Heart right ventricle (tissue), 16 donors: ENCODE measurements at regions of chr7 and their contacts with region 1.

Region 1: GRCh38 chr7:119391356-119391755 is 881.6 kb upstream of the KCND2 start:
- DNase-seq: no peak
- ATAC-seq: no peak
- H3K4me3 ChIP-seq: no peak overlapping the region
- H3K27ac ChIP-seq: no peak overlapping the region
- H3K4me1 ChIP-seq: no peaks in the 10 kb centered on the region
- H3K27me3 ChIP-seq: no peaks in the 10 kb centered on the region
- CTCF ChIP-seq: no peak

Region 2: DNA sequence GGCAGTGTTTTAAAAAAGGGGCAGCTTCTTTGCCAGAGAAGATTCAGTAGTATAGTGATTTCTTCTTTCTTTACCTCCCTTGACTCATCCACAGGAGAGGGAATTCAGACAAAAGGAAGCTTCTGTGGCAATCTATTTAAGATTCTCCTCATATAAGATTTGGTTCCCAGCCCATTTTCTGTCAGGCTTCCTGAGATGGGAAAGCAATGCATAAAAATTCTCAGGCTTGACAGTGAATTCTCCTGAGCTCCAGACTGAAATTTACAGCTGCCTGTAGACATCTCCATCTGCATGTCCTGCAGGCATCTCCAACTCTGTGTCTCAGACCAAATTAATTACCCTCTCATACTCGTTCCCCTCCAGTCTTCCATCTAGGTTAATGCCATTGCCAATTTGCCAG is 1393.7 kb after region 1 on chr7:
- intact Hi-C with region 1: loop called in 1 of 10 experiments (anchors 5 kb)
- DNase-seq: no peak
- ATAC-seq: no peak
- H3K4me3 ChIP-seq: no peak overlapping the region
- H3K27ac ChIP-seq: no peak overlapping the region
- H3K4me1 ChIP-seq: no peaks in the 10 kb centered on the region
- H3K27me3 ChIP-seq: no peaks in the 10 kb centered on the region
- CTCF ChIP-seq: no peak